Heart left ventricle (tissue), 16 donors: ENCODE measurements at regions of chr10 and their contacts with region 1.

Region 1: DNA sequence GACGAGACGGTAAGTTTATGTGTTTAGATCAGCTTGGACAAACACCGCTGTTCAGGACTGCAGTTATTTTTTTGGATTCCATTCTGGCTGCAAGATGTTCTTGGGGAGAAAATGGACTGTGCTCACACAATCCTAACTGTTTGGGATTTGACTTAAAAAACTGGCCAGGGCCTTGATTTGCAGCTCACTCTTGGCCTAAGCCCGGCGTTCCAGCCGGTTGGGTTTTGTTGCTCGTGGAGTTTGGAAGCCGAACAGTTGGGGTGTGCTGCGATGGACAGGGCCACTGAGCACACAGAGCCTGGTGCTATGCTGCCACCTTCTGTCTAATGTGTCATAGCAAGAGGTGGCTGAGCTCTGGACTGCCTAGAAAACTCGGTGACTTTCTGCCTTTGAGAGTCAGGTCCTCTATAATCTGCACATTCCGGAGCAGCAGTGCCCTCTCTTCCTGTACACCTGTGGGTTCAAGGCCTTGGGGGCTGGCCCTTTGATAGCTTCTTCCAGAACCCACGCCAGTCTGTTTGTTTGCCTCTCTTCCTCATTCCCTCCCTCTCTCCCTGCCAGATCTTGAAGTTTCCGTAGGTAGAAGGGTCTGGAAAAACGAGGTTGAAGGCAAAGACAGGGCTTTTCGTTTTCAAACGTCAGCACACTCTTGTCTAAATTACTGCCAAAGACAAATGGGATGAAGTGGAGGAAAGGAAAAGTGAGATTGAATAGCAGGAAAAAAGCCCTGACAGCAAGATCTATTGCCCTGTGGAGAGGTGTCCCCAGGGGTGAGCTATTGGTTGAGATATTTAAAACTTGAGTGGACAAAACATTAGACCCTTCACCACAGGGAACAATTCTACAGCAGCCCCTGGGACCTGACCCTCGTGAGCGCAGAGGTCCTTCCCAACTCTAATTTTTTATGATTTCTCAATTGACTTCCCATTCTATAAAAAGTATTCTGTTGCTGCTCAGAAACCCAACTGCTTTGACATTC is 167.5 kb upstream of the HABP2 start:
- DNase-seq: peak; percentile 83 to 91 (median 87)
- ATAC-seq: peak; percentile 94 to 99 (median 98)
- H3K4me3 ChIP-seq: peak overlapping the region in 2 of 12 donors; percentile 1 to 16
- H3K27ac ChIP-seq: peak overlapping the region in 7 of 12 donors; percentile 2 to 66 (median 41)
- H3K4me1 ChIP-seq: peaks cover 0 to 33% (median 5%) of the 10 kb centered on the region in 12 donors
- H3K27me3 ChIP-seq: peaks cover 0 to 7% (median 0%) of the 10 kb centered on the region in 9 donors
- CTCF ChIP-seq: peak; percentile 81 to 92 (median 84)
- POLR2A ChIP-seq: no peak

Region 2: DNA sequence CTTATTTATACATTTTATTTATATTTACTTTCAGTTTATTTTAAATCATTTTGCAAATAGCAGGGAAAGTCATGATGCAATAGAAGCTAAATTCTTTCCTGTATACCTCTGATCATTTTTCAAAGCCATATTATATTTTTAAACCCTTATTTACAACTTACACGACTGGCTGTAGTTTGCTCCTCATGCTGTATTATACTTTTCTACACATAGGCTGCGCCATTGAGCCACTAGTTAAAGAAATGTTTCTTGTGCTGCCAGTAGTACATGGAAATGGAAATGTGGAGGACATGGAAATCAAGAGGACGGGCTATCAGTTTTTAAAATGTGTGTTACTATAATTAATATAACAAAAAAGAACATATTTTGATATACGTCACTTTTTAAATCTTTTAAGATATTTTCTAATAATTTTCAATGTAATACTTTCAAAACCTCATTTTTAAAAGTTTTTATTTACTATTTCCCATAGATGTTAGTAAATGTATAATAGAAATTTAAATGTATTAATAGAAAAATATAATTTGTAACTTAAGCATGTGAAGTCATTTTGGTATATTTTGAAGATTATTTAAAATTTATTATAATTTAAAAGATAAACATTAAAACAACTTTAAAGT is 819.8 kb before region 1 on chr10:
- intact Hi-C with region 1: loop called (anchors 2 to 10 kb)
- DNase-seq: peak in 2 of 5 donors; percentile 15 to 28
- ATAC-seq: peak in 3 of 4 donors; percentile 48 to 67 (median 51)
- H3K4me3 ChIP-seq: no peak overlapping the region
- H3K27ac ChIP-seq: no peak overlapping the region
- H3K4me1 ChIP-seq: no peaks in the 10 kb centered on the region
- H3K27me3 ChIP-seq: no peaks in the 10 kb centered on the region
- CTCF ChIP-seq: peak; percentile 44 to 73 (median 62)
- POLR2A ChIP-seq: no peak

Region 3: GRCh38 chr10:112721080-112721698 is 664.1 kb before region 1 on chr10:
- intact Hi-C with region 1: loop called in 9 of 10 experiments (anchors 2 to 10 kb)
- DNase-seq: no peak
- ATAC-seq: peak in 3 of 4 donors; percentile 45 to 64 (median 56)
- H3K4me3 ChIP-seq: no peak overlapping the region
- H3K27ac ChIP-seq: no peak overlapping the region
- H3K4me1 ChIP-seq: peaks cover 0 to 3% (median 0%) of the 10 kb centered on the region in 12 donors
- H3K27me3 ChIP-seq: no peaks in the 10 kb centered on the region
- CTCF ChIP-seq: peak; percentile 44 to 78 (median 66)
- POLR2A ChIP-seq: no peak

Region 4: GRCh38 chr10:113126229-113127201 is 258.8 kb before region 1 on chr10:
- intact Hi-C with region 1: loop called in 9 of 10 experiments (anchors 2 to 10 kb)
- DNase-seq: peak; percentile 66 to 86 (median 72)
- ATAC-seq: peak; percentile 69 to 99 (median 94)
- H3K4me3 ChIP-seq: peak overlapping the region in 9 of 12 donors; percentile 20 to 59 (median 42)
- H3K27ac ChIP-seq: peak overlapping the region in 7 of 12 donors; percentile 12 to 74 (median 42)
- H3K4me1 ChIP-seq: peaks cover 0 to 24% (median 7%) of the 10 kb centered on the region in 12 donors
- H3K27me3 ChIP-seq: peaks cover 0 to 5% (median 0%) of the 10 kb centered on the region in 9 donors
- CTCF ChIP-seq: peak; percentile 37 to 94 (median 80)
- POLR2A ChIP-seq: no peak

Region 5: GRCh38 chr10:113563306-113564088 is 178.2 kb after region 1 on chr10:
- intact Hi-C with region 1: loop called in 1 of 10 experiments (anchors 5 kb)
- DNase-seq: peak; percentile 64 to 87 (median 71)
- ATAC-seq: peak; percentile 59 to 93 (median 88)
- H3K4me3 ChIP-seq: peak overlapping the region in 10 of 12 donors; percentile 20 to 55 (median 46)
- H3K27ac ChIP-seq: no peak overlapping the region
- H3K4me1 ChIP-seq: peaks cover 0 to 5% (median 0%) of the 10 kb centered on the region in 12 donors
- H3K27me3 ChIP-seq: peaks cover 0 to 4% (median 0%) of the 10 kb centered on the region in 9 donors
- CTCF ChIP-seq: peak; percentile 96 to 100 (median 98)
- POLR2A ChIP-seq: no peak